Natural killer cell (primary cell): ENCODE measurements at regions of chr12 and their contacts with region 1.

Region 1: DNA sequence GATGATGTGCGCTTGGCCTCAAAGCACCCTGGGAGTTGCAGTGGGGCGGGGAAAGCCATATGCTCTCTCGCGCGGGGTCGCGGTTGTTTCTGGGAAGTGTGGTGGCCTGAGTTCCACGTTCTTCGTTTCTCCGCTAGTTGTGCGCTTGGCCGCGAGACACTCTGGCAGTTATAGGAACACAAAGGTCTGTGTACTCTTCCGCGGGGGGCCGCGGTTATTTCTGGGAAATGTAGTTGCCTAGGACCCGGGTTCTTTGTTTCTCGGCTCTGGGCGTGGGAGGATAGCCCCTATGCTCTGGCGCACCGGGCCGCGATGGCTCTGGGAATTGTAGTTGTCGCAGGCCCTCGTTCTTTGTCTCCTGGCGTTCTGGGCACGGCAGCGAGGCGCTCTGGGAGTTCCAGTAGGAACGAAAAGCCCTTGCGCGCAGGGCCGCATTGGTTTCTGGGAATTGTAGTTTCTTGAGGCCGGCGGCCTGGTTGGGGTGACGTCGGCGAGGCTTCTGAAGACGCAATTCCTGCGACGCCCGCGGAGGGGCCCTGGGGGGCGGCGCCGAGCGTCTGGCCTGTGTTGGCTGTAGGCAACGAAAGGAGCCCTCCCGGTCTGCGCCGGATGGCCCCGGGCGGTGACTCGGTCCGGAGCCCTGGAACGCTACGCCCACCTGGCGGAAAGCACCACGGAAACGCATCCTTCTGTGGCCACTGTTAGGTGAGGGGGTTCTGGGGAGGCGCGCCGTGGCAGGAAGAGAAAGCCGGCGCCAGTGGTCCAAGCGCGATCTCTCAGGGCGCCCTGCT is at the start of gene ZNF140:
- DNase-seq: peak; percentile 95 to 97
- ATAC-seq: peak; percentile 63 to 84 (median 65)
- H3K4me3 ChIP-seq: peak within 1 kb of the TSS; percentile 62
- H3K4me3 Mint-ChIP-seq: no peak within 1 kb of the TSS
- H3K27ac ChIP-seq: peak within 1 kb of the TSS; percentile 88
- H3K27ac Mint-ChIP-seq: no peak within 1 kb of the TSS
- H3K4me1 ChIP-seq: peaks cover 16% of the 10 kb centered on the region
- H3K4me1 Mint-ChIP-seq: peaks cover 4 to 7% of the 10 kb centered on the region in 2 donors
- H3K27me3 ChIP-seq: no peaks in the 10 kb centered on the region
- H3K27me3 Mint-ChIP-seq: peaks cover 0 to 2% of the 10 kb centered on the region in 2 donors
- CTCF ChIP-seq: no peak
- total RNA-seq, gene ZNF140: 8.8 to 15.4 (median 9.9) TPM

Region 2: GRCh38 chr12:132908145-132909044 is 172.2 kb before region 1 on chr12:
- intact Hi-C with region 1: loop called (anchors 1 kb)
- DNase-seq: peak; percentile 88 to 98
- ATAC-seq: peak; percentile 86 to 93 (median 90)
- H3K4me3 ChIP-seq: peak overlapping the region; percentile 68
- H3K4me3 Mint-ChIP-seq: peak overlapping the region; percentile 85
- H3K27ac ChIP-seq: peak overlapping the region; percentile 89
- H3K27ac Mint-ChIP-seq: peak overlapping the region; percentile 83 to 96
- H3K4me1 ChIP-seq: peaks cover 22% of the 10 kb centered on the region
- H3K4me1 Mint-ChIP-seq: peaks cover 0 to 14% of the 10 kb centered on the region in 2 donors
- H3K27me3 ChIP-seq: peaks cover 8% of the 10 kb centered on the region
- H3K27me3 Mint-ChIP-seq: peaks cover 0 to 10% of the 10 kb centered on the region in 2 donors
- CTCF ChIP-seq: no peak

Region 3: DNA sequence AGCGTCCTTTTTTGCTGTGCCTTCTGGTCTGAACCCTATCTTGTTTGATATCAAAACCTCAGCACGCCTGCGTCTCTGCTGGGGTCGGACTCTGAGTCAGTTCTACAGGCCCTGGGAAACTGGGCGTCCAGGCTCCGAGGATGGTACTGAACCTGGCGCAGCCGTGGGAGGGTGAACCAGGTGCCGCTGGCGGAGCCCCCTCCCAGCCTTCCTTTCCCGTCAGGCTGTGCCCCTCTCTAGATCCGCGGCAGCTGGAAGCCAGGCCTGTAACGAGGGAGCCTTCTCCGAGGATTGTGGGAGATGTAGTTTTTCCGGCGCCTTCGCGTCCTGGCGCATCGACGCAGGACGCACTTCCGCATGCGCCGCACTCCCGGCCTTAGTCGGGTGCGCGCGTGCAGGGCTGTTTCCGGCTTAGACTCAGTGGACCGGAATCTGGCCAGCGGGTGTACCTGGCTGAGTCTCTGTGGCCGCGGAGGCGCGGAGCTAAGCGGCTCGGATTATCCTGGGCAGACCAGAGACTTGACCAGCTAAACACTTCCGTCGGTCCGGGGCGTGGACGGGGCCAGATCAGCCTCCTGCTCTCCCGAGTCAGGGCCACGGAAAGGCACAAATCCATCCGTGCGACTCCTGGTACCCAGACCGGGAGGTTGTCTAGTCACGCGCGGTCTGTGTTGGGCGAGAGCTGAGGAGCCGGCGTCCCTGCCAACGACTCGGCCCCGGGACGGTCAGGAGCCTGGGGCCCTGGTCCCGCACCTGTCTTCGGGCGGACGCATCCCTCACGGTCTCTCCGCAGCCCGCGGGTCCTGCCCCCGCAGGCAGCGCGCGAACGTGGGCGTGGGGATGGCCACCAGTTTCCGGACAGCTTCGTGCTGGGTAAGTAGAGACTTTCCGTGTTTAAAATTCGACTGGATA is 94.3 kb before region 1 on chr12 and contains the start of gene ZNF26:
- intact Hi-C with region 1: loop called (anchors 1 kb)
- DNase-seq: peak; percentile 80 to 95
- ATAC-seq: peak; percentile 96 to 99 (median 98)
- H3K4me3 ChIP-seq: peak within 1 kb of the TSS; percentile 73
- H3K4me3 Mint-ChIP-seq: peak within 1 kb of the TSS; percentile 92
- H3K27ac ChIP-seq: peak within 1 kb of the TSS; percentile 89
- H3K27ac Mint-ChIP-seq: peak within 1 kb of the TSS; percentile 95 to 96
- H3K4me1 ChIP-seq: peaks cover 23% of the 10 kb centered on the region
- H3K4me1 Mint-ChIP-seq: peaks cover 28 to 34% of the 10 kb centered on the region in 2 donors
- H3K27me3 ChIP-seq: peaks cover 3% of the 10 kb centered on the region
- H3K27me3 Mint-ChIP-seq: peaks cover 3 to 17% of the 10 kb centered on the region in 2 donors
- CTCF ChIP-seq: no peak
- total RNA-seq, gene ZNF26: 38.7 to 45.1 (median 43.0) TPM

Region 4: DNA sequence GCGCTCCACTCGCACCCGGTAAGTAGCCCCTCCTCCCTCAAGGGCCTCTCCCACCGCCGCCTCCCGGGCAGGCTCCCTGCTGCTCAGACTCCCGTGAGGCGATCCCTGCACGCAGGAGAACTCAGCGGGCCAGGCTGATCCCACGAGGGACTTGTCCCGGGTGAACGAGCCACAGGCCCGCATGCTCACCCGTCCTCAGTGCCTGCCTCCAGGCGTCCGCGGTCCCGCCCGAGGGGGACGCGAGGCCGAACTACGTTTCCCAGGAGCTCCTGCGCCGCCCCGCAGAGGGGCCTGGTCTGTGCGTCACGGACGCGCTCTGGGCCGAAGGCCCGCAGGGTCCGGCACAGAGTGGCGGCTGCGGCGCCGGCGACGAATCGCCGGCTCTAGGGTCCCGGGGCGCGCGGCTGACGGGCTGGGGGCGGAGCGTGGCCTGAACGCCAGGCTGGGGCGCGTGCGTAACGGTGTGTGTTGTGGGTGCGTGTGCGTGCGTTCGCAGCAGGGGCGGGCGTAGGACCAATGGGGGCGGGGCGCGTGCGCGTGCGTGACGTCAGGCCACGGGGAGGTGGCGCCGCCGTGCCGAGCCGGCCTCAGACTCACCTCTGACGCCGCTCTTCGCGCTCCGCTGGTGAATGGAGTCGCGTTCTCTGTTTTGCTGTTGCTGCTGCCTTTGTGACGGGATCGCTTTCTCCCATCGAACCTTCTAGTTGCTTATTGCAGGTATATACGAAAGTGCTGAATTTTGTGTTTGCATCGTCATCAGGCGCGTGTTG is 49.7 kb after region 1 on chr12 and contains the starts of genes ZNF10 and ZNF891:
- intact Hi-C with region 1: loop called (anchors 1 kb)
- DNase-seq: peak; percentile 98
- ATAC-seq: peak; percentile 87 to 96 (median 87)
- H3K4me3 ChIP-seq: peak within 1 kb of the TSS; percentile 80
- H3K4me3 Mint-ChIP-seq: peak within 1 kb of the TSS; percentile 95
- H3K27ac ChIP-seq: peak within 1 kb of the TSS; percentile 99
- H3K27ac Mint-ChIP-seq: peak within 1 kb of the TSS; percentile 99 to 100
- H3K4me1 ChIP-seq: peaks cover 9% of the 10 kb centered on the region
- H3K4me1 Mint-ChIP-seq: peaks cover 20 to 24% of the 10 kb centered on the region in 2 donors
- H3K27me3 ChIP-seq: no peaks in the 10 kb centered on the region
- H3K27me3 Mint-ChIP-seq: no peaks in the 10 kb centered on the region
- CTCF ChIP-seq: no peak
- total RNA-seq, gene ZNF10: 12.9 to 27.9 (median 26.0) TPM
- total RNA-seq, gene ZNF891: 1.9 to 3.1 (median 2.3) TPM

Region 5: GRCh38 chr12:133145981-133146380 is 65.4 kb after region 1 on chr12:
- intact Hi-C with region 1: no loop called
- DNase-seq: no peak
- ATAC-seq: no peak
- H3K4me3 ChIP-seq: no peak overlapping the region
- H3K4me3 Mint-ChIP-seq: no peak overlapping the region
- H3K27ac ChIP-seq: no peak overlapping the region
- H3K27ac Mint-ChIP-seq: no peak overlapping the region
- H3K4me1 ChIP-seq: no peaks in the 10 kb centered on the region
- H3K4me1 Mint-ChIP-seq: no peaks in the 10 kb centered on the region
- H3K27me3 ChIP-seq: no peaks in the 10 kb centered on the region
- H3K27me3 Mint-ChIP-seq: no peaks in the 10 kb centered on the region
- CTCF ChIP-seq: no peak